Mammary epithelial cell (primary cell): ENCODE measurements at regions of chr17 and their contacts with region 1.

Region 1: GRCh38 chr17:2244545-2245525 is 58.8 kb downstream of the SMG6 start:
- DNase-seq: peak; percentile 66
- H3K4me3 ChIP-seq: no peak overlapping the region
- H3K27ac ChIP-seq: no peak overlapping the region
- H3K4me1 ChIP-seq: peaks cover 17% of the 10 kb centered on the region
- H3K27me3 ChIP-seq: no peaks in the 10 kb centered on the region
- CTCF ChIP-seq: peak; percentile 98 to 99

Region 2: DNA sequence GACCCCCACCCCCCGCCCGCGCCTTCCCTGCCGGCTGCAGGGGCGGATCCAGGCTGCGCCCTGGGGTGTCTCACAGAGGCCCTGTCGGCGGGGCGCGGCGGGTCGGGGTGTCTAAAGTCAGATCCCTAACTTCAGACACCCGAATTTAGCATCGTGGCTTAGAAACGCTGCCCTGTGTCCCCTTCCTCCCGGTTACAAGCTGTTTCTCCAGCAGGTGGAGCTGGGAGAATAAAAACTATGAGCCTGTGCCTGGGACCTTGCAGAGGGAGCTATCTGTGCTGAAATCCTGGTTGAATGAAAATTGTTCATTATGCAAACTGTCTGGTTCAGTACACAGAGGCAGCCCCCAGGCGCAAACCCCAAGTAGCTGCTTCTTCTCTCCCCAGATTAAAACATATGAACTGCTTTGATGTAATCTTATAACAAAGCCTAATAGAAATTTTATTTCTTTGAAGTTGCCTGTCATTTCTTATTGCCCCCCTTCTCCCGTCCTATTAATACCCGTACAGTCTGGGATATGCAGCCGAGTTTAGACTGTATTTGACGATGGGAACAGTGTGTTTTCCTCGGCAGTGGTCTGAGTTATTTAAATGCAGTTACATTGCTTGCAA is 336.0 kb before region 1 on chr17:
- CTCF ChIA-PET with region 1: interaction called, 3 read pairs
- dilution Hi-C with region 1: no loop called
- in situ Hi-C with region 1: loop called in 1 of 2 experiments (anchors 10 kb)
- intact Hi-C with region 1: loop called (anchors 1 kb)
- DNase-seq: peak; percentile 54
- H3K4me3 ChIP-seq: no peak overlapping the region
- H3K27ac ChIP-seq: no peak overlapping the region
- H3K4me1 ChIP-seq: peaks cover 6% of the 10 kb centered on the region
- H3K27me3 ChIP-seq: peaks cover 2% of the 10 kb centered on the region
- CTCF ChIP-seq: peak; percentile 49 to 81

Region 3: DNA sequence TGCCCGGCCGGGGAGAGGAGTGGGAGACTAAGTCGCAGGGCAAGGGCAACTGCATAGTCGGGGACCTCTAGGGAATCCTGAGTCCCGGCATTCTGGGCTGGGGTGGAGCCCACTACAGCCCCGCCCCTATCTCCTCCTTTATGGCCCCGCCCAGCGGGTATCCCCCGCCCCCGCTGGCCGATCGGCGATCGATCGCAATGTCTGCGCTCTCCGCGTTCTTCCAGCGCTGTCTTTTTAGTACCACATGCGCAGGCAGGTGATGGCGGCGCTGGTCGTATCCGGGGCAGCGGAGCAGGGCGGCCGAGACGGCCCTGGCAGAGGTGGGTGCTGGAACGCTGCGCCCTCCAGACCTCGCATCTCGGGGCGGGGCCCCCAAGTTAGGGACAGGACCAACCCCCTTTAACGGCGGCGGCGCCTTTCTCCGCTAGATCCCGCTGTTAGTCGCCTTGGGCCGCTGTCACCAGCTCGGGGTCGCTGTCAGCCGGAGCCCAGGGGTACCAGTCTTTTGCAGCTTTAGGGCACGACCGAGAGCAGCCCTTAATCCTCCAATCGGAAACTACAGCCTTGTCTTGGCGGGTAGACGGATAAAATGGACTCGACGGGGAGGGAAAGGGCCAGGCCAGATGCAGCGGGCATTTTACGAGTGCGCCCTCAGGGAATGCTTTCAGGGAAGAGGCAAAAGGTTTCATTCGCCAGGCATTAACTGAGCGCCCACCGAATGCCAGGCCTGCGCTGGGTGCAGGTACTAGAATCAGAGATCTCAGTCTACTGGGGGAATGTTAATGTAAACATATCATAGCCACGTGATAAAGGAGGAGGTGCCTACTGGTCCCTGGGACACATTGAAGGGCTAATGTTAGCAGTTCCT is 214.7 kb before region 1 on chr17 and contains the start of gene DPH1:
- CTCF ChIA-PET with region 1: interaction called, 3 read pairs
- dilution Hi-C with region 1: no loop called
- in situ Hi-C with region 1: no loop called
- intact Hi-C with region 1: loop called (anchors 1 kb)
- DNase-seq: peak; percentile 84
- H3K4me3 ChIP-seq: peak within 1 kb of the TSS; percentile 95 to 99 (median 97)
- H3K27ac ChIP-seq: peak within 1 kb of the TSS; percentile 78
- H3K4me1 ChIP-seq: peaks cover 10% of the 10 kb centered on the region
- H3K27me3 ChIP-seq: no peaks in the 10 kb centered on the region
- CTCF ChIP-seq: no peak
- total RNA-seq, gene DPH1: 29.0 to 36.2 TPM

Region 4: DNA sequence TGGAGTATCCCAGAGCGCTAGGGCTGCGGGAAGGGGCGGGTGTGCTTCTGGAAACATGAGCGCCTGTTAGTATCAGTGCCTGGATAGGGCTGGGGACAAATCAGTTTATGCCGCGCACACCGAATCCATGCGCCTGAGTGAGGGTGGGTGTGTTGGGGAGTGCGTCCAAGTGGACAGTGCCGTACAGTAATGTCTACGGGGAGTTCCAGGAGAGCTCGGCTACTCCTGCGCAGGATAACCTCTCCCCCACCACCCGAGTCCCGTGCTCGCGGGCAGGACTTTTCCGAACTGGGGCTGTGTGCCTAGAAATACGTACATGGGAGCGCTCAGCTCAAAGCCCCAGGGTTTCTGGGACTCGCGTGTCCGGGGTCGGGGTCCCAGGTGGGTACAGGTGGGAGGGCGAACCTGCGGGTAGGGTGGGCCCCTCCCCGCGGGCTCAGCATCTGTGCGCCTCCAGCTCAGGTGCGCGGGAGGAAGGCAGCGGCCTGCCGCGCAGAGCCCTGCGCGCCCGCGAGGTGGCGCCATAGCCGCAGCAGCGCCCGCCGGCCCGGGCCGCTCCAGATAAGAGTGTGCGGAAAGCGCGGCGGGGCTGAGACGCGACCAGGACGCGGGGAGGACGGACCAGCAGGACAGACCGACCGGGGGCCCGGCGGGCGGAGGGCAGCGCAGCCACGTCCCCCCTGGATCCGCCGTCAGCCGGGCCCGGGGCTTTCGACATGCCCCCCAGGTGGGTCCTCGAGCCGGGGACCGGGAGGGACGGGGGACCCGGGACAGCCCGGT is 190.1 kb before region 1 on chr17 and contains the start of gene HIC1:
- CTCF ChIA-PET with region 1: interaction called, 41 read pairs
- dilution Hi-C with region 1: no loop called
- in situ Hi-C with region 1: loop called in 1 of 2 experiments (anchors 5 kb)
- intact Hi-C with region 1: loop called (anchors 1 kb)
- DNase-seq: peak; percentile 57
- H3K4me3 ChIP-seq: peak within 1 kb of the TSS; percentile 43 to 55 (median 45)
- H3K27ac ChIP-seq: no peak within 1 kb of the TSS
- H3K4me1 ChIP-seq: peaks cover 15% of the 10 kb centered on the region
- H3K27me3 ChIP-seq: no peaks in the 10 kb centered on the region
- CTCF ChIP-seq: peak; percentile 68 to 71
- total RNA-seq, gene HIC1: 0.67 to 1.3 TPM

Region 5: DNA sequence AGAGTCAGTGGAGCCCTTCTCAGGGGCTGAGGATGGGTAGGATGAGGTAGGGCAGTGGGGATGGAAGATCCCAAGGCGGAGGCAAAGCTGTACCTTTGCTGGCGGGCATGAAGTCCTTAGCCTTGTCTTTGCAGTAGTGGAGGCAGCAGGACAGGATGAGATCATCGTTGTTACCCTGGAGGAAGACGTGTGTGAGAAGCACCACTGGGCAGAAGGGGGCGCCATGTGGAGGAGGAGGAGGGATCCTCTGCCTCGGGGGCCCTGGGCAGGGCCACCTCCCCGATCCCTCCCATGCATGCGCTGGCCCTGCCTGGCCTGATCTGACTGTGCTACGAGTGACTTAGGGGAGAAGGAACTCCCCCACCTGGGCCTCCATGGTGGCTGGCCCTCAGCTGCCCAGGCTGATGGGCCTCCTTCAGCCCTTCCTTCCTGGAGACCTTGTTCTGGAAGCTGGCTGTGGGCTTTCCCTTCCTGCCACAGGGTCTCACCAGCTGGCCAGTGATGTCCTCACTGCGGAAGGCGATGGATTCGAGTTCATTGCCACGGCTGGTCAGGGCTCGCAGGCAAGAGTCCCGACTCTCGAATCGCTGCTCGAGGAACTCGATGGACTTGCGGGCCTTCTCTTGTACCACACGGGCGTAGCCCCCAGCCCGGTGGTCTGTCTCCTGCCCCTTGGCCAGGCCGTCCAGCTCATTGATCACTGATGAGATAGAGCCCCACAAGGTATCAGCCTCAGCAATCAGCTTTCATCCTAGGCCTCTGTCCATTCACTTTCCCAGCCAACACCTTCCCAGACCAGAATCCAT is 179.7 kb before region 1 on chr17:
- CTCF ChIA-PET with region 1: no interaction called
- dilution Hi-C with region 1: no loop called
- in situ Hi-C with region 1: loop called in 1 of 2 experiments (anchors 10 kb)
- intact Hi-C with region 1: no loop called
- DNase-seq: no peak
- H3K4me3 ChIP-seq: no peak overlapping the region
- H3K27ac ChIP-seq: no peak overlapping the region
- H3K4me1 ChIP-seq: no peaks in the 10 kb centered on the region
- H3K27me3 ChIP-seq: no peaks in the 10 kb centered on the region
- CTCF ChIP-seq: peak; percentile 11 to 39

Region 6: GRCh38 chr17:2094891-2095535 is 149.8 kb before region 1 on chr17:
- CTCF ChIA-PET with region 1: interaction called, 3 read pairs
- dilution Hi-C with region 1: no loop called
- in situ Hi-C with region 1: no loop called
- intact Hi-C with region 1: loop called (anchors 1 kb)
- DNase-seq: no peak
- H3K4me3 ChIP-seq: no peak overlapping the region
- H3K27ac ChIP-seq: no peak overlapping the region
- H3K4me1 ChIP-seq: peaks cover 14% of the 10 kb centered on the region
- H3K27me3 ChIP-seq: no peaks in the 10 kb centered on the region
- CTCF ChIP-seq: peak; percentile 38 to 71

Region 7: GRCh38 chr17:2230877-2231276 is 14.0 kb before region 1 on chr17:
- CTCF ChIA-PET with region 1: no interaction called
- dilution Hi-C with region 1: no loop called
- in situ Hi-C with region 1: no loop called
- intact Hi-C with region 1: loop called (anchors 1 kb)
- DNase-seq: no peak
- H3K4me3 ChIP-seq: no peak overlapping the region
- H3K27ac ChIP-seq: no peak overlapping the region
- H3K4me1 ChIP-seq: peaks cover 13% of the 10 kb centered on the region
- H3K27me3 ChIP-seq: no peaks in the 10 kb centered on the region
- CTCF ChIP-seq: no peak

Region 8: DNA sequence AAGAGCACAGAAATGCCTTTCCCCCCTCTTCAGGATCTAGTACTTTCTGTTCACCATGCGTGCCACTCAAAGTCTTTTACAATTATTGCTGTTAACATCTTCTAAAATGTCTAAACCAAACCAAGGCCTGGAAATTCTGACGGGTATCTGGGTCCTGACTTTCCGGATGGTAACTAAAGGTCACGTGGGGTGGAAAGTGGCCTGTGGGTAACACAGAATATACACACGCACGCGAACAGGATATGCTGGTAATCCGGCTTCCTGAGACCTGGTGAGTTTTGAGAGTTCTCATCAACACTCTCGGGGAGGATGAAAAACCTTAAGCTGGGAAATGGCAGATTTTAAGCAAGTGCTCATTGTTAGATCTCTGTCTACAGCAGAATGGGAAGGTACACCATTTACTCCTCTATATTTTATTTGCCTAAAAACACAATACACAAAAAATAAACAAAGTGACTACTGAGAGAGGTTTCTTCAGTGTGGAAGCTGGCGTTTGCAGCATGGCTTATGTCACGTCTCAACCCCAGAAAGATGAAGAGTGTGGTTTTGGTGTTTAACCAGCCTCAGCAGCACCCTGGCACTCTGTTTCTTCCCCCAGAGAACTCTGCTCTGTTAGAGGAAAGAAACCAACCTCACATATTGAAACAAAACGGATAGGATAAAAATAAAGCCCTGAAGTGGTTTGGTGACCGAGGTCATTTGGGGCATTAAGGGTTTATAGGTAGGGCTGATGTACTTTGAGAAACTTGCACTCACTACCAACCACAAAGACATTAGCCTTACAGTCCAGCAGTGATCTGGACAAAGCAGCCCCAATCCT is 21.4 kb after region 1 on chr17:
- CTCF ChIA-PET with region 1: no interaction called
- dilution Hi-C with region 1: no loop called
- in situ Hi-C with region 1: no loop called
- intact Hi-C with region 1: no loop called
- DNase-seq: no peak
- H3K4me3 ChIP-seq: no peak overlapping the region
- H3K27ac ChIP-seq: no peak overlapping the region
- H3K4me1 ChIP-seq: peaks cover 12% of the 10 kb centered on the region
- H3K27me3 ChIP-seq: no peaks in the 10 kb centered on the region
- CTCF ChIP-seq: no peak